Panc1 (cell line): ENCODE measurements at regions of chr11 and their contacts with region 1.

Region 1: GRCh38 chr11:77442394-77443053 is 31.4 kb downstream of the PAK1 start:
- DNase-seq: no peak
- ATAC-seq: no peak
- H3K4me3 ChIP-seq: no peak overlapping the region
- H3K27ac ChIP-seq: no peak overlapping the region
- H3K4me1 ChIP-seq: no peaks in the 10 kb centered on the region
- H3K27me3 ChIP-seq: peaks cover 9% of the 10 kb centered on the region; the same call in 1 of the 2 replicates
- CTCF ChIP-seq: no peak

Region 2: DNA sequence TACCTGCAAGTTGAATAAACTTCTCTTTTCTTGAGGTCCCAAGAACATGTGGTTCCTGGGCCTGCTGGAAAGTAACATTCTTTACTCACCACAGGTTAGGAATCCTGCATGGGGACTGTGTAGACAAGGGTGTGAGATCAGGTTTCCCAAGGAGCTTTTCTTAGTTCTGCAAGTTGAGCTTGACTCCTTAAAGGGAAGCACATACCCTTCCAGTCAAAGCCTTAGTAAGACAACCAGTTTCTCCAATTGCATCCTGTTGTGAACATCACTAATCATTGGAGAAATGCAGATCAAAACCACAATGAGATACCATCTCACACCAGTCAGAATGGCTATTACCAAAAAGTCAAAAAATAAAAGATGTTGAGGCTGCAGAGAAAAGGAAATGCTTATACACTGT is 79.7 kb after region 1 on chr11:
- CTCF ChIA-PET with region 1: no interaction called
- POLR2A ChIA-PET with region 1: no interaction called
- in situ Hi-C with region 1: loop called (anchors 5 kb)
- intact Hi-C with region 1: no loop called
- DNase-seq: no peak
- ATAC-seq: no peak
- H3K4me3 ChIP-seq: no peak overlapping the region
- H3K27ac ChIP-seq: no peak overlapping the region
- H3K4me1 ChIP-seq: no peaks in the 10 kb centered on the region
- H3K27me3 ChIP-seq: peaks cover 3% of the 10 kb centered on the region; the same call in 1 of the 2 replicates
- CTCF ChIP-seq: no peak

Region 3: DNA sequence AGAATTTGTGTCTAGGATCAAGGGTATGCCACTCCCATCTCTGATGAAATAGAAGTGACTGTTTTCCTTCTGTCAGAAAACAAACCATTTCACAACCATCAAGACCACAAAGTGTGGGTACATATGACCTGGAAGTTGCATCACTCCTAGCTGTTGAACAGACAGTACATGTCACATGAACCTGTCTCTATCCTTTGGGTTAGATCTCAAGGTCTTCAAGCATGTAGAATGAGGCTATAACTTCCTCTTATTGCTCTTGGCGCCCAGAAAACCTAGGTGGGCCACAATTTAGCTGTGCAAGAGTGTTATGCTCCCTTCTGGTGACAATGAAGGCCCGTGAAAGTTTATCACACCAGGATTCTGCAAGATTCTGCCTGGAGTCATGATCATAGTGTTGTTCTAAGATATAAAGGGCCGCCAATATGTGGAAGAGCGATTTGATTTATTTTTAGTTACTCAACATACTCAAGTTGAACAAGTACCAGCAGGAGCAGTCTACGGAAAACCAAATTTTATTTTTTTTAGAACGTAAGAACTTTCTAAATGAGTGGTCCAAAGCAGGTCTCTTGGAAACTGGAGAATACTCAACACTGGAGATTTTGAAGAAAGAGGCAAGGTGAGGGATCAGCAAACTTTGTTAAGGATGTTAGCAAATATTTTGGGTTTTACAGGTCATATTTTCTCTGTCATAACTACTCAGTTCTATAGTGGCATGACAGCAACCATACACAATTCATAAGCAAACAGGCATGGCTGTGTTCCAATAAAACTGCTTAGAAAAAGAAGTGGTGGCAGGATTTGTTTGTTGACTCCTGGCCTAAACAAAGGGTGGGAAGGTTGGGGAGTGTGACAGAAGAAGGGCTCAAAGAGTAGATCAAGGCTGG is 848.0 kb after region 1 on chr11:
- CTCF ChIA-PET with region 1: no interaction called
- POLR2A ChIA-PET with region 1: no interaction called
- in situ Hi-C with region 1: no loop called
- intact Hi-C with region 1: no loop called
- DNase-seq: peak; percentile 51
- ATAC-seq: no peak
- H3K4me3 ChIP-seq: no peak overlapping the region
- H3K27ac ChIP-seq: no peak overlapping the region
- H3K4me1 ChIP-seq: no peaks in the 10 kb centered on the region
- H3K27me3 ChIP-seq: no peaks in the 10 kb centered on the region
- CTCF ChIP-seq: no peak; the same call in 1 of the 2 replicates